HAP-1 (cell line): ENCODE measurements at regions of chrX and their contacts with region 1.

Region 1: DNA sequence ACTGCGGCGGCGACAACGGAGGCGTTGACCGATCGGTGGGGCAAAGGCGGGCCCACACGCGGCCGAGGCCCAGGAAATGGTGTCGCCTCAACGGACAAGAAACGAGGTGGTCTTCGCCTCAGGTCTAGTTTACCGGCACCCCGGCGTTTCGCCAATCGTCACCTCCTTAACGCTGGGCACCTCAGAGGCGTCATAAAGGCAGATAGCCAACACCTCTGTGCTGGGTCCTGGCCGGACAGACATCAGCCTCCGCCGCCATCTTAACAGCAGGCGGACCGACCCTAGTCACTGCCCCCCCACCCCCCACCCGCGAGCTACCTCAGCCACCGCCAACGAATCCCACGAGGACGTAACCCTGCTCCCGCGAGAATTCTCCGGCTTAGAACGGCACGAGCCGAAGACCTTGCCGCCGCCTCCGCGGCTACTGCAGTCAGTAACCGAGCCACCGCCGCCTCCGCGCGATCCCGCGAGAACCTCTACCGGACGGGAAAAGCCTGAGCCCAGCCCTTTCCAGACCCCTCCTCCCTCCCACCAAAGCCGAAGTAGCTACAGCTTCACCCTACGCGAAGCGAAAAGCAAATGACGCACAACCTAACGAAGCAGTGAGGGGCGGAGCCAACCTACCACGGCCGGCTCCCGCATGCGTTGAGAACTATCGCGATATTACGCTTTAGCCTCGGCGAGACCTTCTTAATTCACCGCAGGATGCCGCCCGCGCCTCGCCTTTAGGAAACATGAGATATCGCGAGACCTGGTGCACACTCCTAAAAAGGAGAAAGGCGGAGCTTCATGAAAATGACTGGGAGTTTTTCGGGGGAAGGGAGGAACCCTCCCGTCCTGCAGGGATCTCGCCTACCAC is 2.7 kb downstream of the HUWE1 start:
- DNase-seq: peak; percentile 99 to 100
- H3K4me3 ChIP-seq: peak overlapping the region; percentile 82
- H3K4me1 ChIP-seq: peaks cover 6% of the 10 kb centered on the region; the same call in 1 of the 2 replicates
- H3K27me3 ChIP-seq: no peaks in the 10 kb centered on the region

Region 2: DNA sequence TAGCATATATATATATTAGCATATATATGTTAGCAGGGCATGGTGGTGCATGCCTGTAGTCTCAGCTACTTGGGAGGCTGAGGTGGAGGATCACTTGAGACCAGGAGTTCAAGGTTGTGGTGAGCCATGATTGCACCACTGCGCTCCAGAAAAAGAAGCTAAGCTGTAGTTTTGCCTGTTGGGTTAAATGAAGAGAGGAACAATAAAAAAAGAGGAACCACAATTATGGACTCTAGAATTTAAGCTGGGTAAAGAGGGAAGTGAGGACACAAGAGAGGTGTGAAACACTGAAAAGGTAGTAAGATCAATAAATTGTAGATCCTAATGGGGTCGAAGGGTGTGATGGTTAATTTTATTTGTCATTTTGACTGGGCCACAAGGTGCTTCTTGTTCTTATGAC is 209.1 kb before region 1 on chrX:
- in situ Hi-C with region 1: no loop called
- DNase-seq: no peak
- H3K4me3 ChIP-seq: no peak overlapping the region
- H3K4me1 ChIP-seq: no peaks in the 10 kb centered on the region
- H3K27me3 ChIP-seq: no peaks in the 10 kb centered on the region

Region 3: DNA sequence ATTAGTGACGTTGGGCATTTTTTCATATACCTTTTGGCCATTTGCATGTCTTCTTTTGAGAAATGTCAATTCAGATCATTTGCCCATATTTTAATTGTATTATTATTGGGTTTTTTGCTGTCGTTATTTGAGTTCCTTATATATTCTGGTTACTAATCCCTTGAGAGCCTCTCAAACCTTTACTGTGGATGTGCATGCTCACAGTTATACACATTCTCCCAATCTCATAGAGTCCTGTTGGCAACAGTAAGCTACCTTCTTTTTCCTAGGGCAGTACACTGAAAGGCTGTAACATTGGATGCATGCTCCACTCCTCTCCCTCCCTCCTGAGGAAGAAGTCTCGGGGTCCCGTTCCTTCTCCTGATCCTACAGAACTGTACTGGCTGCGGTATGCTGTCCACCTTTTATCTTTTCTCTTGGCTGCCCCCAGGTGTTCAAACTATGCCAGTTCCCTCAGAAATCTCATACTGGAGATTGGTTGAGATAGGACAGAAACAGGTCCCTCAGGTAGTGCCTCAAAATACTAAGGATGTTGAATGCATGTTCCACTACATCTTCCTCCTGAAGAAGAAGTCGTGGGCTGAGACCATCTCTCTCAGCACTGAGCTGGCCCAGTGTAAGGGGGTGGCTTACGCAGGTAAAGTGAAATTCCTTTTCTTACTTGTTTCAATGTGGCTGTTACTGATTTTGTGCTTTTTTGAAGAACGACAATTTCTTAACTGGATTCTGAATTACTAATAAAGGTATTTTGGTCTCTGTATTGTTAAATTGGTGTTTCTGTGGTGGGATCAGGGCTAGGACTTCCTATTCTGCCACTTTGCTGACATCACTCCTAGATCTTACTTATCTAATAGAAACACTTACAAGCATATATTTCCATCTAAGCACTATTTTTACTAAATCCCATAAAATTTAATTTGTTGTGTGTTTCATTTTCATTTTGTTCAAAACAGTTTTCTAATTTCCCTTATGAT is 148.2 kb after region 1 on chrX:
- in situ Hi-C with region 1: loop called (anchors 10 kb)
- DNase-seq: peak; percentile 51 to 71
- H3K4me3 ChIP-seq: no peak overlapping the region
- H3K4me1 ChIP-seq: no peaks in the 10 kb centered on the region
- H3K27me3 ChIP-seq: no peaks in the 10 kb centered on the region